Head of caudate nucleus (tissue), 42 donors: ENCODE measurements at regions of chr11 and their contacts with region 1.

Region 1: DNA sequence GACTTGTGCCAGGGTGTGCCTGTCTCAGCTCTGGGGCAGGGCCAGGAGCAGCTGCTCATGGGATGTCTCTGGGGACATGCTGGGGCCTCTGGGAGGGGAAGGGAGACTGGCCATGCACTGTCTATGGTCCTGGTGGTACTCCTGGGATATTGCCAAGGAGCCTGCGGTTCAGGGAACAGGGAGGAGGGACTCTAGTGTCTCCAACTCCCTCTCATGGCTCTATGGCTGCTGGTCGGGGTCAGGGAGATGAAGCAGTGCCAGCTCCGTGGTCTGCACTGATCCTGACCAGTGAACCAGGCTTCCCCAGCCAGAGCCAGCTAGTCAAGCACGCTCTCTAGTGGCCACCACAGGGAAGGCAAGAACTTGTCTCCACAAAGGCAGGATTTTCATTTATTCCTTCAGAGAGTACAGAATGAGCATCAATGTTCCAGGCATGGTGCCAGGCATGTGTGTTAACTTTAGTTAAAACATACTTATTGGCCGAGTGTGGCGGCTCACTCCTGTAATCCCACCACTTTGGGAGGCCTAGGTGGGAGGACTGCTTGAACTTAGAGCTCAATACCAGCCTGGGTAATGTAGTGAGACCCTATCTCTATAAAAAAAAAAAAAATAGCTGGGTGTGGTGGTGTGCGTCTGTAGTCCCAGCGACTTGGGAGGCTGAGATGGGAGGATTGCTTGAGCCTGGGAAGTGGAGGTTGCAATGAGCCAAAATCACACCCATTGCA is 2.5 kb upstream of the BEST1 start:
- DNase-seq: peak; percentile 79 to 96 (median 91)

Region 2: DNA sequence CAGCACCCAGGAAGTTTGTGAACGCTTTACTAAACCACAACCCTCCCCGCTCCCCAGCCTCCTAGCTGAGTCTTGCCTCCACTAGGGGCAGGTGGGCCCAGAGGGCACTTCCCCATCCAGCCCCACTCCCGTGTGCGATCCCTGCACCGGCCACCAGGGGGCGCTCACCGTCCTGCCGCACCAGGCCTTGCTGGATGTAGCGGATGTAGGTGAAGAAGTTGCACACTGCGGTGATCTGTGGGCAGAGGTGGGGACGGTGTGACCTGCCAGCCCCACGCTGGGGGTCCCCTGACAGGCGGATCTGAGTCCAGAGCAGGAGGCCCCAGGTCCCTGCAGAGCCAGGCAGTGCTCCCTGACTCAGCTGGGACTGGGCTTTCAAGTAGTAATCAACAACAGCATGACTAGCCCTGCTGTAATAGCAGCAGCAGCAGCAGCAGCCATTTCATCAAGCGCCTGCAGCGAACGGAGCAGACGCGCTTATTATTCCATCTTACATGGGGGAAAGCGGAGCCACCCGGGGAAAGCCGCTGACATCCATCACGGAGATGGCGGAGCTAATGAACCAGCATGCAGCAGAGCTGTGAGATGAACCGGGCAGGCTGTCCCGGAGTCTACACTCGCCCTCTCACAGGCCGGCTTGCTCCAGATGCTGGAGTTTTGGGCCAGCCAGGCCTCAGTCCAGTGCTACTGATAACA is 48.4 kb before region 1 on chr11:
- intact Hi-C with region 1: loop called (anchors 2 kb)
- DNase-seq: peak; percentile 48 to 94 (median 85)

Region 3: DNA sequence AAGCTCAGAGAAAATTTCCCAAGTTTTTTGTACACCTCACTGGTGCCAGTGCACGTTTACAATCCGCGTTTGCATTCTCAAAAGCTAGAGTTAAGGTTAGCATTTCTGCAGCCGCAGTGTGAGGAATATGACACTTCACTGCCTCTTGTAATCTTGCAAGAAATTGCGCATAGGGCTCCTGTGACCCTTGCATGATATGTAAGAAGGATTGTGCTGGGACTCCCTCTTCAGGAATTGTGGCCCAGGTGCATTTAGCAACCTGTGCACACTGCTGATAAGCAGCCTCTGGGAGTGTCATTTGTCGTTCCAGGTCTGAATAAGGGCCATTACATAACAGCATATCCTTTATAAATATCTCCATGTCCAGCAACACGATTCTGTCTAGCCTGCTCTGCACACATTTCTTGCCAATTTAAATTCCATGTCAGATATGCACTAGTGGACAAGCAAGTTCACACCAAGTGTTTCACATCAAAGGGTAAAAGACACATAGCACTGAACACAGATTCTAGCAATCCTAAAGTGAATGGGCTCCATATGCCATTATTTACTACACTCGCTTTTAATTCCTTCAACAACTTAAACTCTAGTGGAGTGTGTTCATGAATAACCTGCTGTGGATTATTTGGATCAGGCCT is 107.0 kb after region 1 on chr11:
- intact Hi-C with region 1: no loop called
- DNase-seq: peak in 2 of 42 donors; percentile 7 to 14